Vagina (tissue), 2 donors: ENCODE measurements at regions of chr16 and their contacts with region 1.

Region 1: GRCh38 chr16:31179747-31180459 is at the start of gene FUS:
- DNase-seq: peak; percentile 94 to 97
- H3K4me3 ChIP-seq: peak within 1 kb of the TSS; percentile 73 to 99
- H3K27ac ChIP-seq: peak within 1 kb of the TSS; percentile 100
- H3K4me1 ChIP-seq: peaks cover 44% of the 10 kb centered on the region
- H3K27me3 ChIP-seq: no peaks in the 10 kb centered on the region
- CTCF ChIP-seq: peak in 1 of 3 experiments; percentile 19
- POLR2A ChIP-seq: peak in 1 of 2 donors; percentile 98
- total RNA-seq, gene FUS: 74.2 TPM

Region 2: GRCh38 chr16:31142109-31143010 is 37.5 kb before region 1 on chr16:
- intact Hi-C with region 1: loop called (anchors 2 kb)
- DNase-seq: peak; percentile 99 to 100
- H3K4me3 ChIP-seq: peak overlapping the region; percentile 51 to 70
- H3K27ac ChIP-seq: peak overlapping the region; percentile 87
- H3K4me1 ChIP-seq: peaks cover 39% of the 10 kb centered on the region
- H3K27me3 ChIP-seq: no peaks in the 10 kb centered on the region
- CTCF ChIP-seq: peak; percentile 96 to 97 (median 97)
- POLR2A ChIP-seq: peak in 1 of 2 donors; percentile 18

Region 3: DNA sequence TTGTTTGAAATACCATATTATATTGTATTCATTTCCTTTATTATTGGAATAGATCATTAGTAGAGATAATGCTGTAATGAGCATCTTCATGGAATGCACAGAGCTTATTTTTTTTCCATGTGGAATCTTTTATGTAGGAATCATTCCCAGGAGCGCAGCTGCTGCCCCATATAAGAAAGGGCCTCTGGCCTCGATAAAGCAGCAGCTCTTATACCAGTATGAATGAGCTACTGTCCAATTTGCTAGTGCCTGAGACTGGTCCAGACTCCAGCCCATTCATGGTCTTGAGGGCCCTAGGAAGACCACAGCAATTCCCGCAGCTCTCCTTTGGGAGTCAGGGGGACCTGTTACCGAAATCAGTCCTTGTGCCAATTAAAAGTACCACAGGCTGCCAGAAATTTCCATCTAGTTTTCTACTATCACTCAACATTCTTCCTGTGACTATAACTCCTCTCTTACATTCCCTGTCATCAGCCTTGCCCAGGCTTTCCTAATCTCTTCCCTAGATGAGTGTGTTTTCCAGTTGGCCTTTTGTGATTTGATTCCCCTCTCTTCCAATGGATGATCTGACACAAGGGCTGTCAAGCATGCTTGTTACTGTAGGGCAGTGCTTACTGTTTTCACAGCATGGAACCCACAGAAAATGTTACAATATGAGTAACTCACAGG is 260.7 kb after region 1 on chr16:
- intact Hi-C with region 1: loop called (anchors 10 kb)
- DNase-seq: no peak
- H3K4me3 ChIP-seq: no peak overlapping the region
- H3K27ac ChIP-seq: no peak overlapping the region
- H3K4me1 ChIP-seq: no peaks in the 10 kb centered on the region
- H3K27me3 ChIP-seq: no peaks in the 10 kb centered on the region
- CTCF ChIP-seq: no peak
- POLR2A ChIP-seq: no peak